H1 (cell line): ENCODE measurements at regions of chr6 and their contacts with region 1.

Region 1: DNA sequence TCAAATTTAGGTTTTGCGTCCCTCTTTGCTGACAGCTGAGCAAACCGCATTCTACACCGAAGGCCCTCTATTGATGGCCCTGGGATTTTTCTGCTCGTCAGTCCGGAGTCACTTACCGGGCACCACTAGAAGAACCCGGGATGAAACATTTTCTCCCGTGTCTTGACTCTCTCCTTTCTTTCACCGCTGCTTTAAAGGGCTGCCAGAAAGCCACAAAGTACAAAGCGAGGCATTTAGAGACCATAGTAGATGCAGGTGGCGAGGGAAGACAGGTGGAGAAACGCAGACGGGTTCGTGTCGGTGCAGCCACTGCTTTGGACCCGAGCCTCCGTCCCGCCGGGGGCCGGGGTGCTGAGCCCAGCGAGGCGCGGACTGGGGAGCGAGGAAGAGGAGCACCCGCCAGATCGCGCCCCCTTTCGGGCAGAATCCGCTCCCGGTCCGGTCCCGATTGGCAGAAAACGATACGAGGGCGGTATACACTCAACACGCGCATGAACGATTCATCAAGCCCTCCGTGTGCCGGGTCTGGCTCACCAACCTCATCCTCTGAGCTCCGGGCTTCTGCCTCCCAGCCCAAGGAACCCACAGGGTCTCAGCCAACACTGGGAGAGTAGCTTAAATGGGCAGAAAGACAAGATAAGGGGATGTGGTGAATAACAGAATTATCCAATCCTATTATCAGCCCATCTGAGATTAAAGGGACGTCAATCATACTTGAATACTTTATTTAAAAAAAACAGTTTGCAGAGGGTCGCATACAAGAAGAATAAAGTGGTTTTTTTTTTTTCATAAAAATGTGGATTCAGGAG is 84.9 kb downstream of the TRIM27 start:
- DNase-seq: peak; percentile 69 to 96
- H3K4me3 ChIP-seq: peak overlapping the region; percentile 80 to 96 (median 88)
- H3K27ac ChIP-seq: no peak overlapping the region
- H3K4me1 ChIP-seq: no peaks in the 10 kb centered on the region
- H3K27me3 ChIP-seq: no peaks in the 10 kb centered on the region; a peak in 1 of 7 replicates
- CTCF ChIP-seq: peak; percentile 61 to 89 (median 74)
- EP300 ChIP-seq: no peak
- POLR2A ChIP-seq: no peak
- RAD21 ChIP-seq: peak; percentile 38 to 47

Region 2: GRCh38 chr6:28824793-28825731 is 13.8 kb before region 1 on chr6:
- CTCF ChIA-PET with region 1: interaction called, 28 read pairs
- POLR2A ChIA-PET with region 1: interaction called, 9 read pairs
- DNase-seq: no peak
- H3K4me3 ChIP-seq: peak overlapping the region; percentile 51 to 62 (median 58); a peak in 7 of 8 replicates
- H3K27ac ChIP-seq: no peak overlapping the region
- H3K4me1 ChIP-seq: peaks cover 0 to 3% (median 0%) of the 10 kb centered on the region in 4 experiments; a peak in 4 of 7 replicates
- H3K27me3 ChIP-seq: peaks cover 29 to 64% (median 46%) of the 10 kb centered on the region in 4 experiments
- CTCF ChIP-seq: no peak
- EP300 ChIP-seq: no peak
- POLR2A ChIP-seq: no peak
- RAD21 ChIP-seq: no peak

Region 3: DNA sequence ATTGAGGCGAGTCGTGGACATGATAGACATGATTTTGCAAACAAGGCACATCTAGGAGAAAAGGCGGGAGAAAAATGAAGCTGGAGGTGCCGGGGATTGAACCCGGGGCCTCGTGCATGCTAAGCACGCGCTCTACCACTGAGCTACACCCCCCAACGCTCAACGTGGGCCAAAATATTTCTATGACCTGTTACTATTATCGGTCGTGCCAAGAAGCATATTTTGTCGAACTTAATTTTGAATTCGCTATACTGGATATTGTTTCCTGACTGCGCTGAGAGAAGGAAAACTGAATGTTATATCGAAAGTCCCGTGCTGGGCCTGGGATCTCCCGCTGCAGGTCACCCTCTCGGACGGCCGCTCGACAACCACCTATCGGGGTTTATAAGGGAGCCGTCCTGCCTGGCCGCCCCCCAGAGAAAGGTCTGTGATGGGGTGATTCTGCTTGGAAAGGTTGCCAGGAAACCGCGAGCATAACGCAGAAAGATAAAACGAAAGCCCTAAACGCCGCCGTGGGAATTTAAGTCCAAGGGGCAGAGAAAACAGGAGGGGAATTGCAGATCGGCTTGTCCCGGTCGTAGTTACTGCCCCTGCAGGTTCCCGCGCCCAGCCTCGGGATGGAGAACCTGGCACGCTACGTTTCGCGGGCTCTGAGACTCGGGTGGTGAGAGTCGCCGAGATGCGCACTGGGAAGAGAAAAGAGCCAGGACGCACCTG is 24.9 kb after region 1 on chr6:
- CTCF ChIA-PET with region 1: interaction called, 107 read pairs
- POLR2A ChIA-PET with region 1: interaction called, 55 read pairs
- DNase-seq: peak in 1 of 2 experiments; percentile 91
- H3K4me3 ChIP-seq: peak overlapping the region; percentile 89 to 97 (median 92)
- H3K27ac ChIP-seq: no peak overlapping the region
- H3K4me1 ChIP-seq: peaks cover 0 to 4% (median 1%) of the 10 kb centered on the region in 4 experiments; a peak in 3 of 7 replicates
- H3K27me3 ChIP-seq: 0 out of 7 replicates have a peak, but pooled peaks cover 0 to 4% (median 0%) of the 10 kb centered on the region in 4 experiments
- CTCF ChIP-seq: no peak
- EP300 ChIP-seq: no peak
- POLR2A ChIP-seq: 0 out of 3 replicates have a peak, but pooled peaks of 1 of the 2 experiments have one; percentile 25
- RAD21 ChIP-seq: peak in 1 of 2 experiments; percentile 10; a peak in 1 of 4 replicates

Region 4: GRCh38 chr6:28875191-28875747 is 36.4 kb after region 1 on chr6:
- CTCF ChIA-PET with region 1: interaction called, 10 read pairs
- POLR2A ChIA-PET with region 1: interaction called, 6 read pairs
- DNase-seq: no peak
- H3K4me3 ChIP-seq: peak overlapping the region in 1 of 4 experiments; percentile 15; a peak in 1 of 8 replicates
- H3K27ac ChIP-seq: no peak overlapping the region
- H3K4me1 ChIP-seq: peaks cover 1 to 5% (median 4%) of the 10 kb centered on the region in 4 experiments; a peak in 4 of 7 replicates
- H3K27me3 ChIP-seq: no peaks in the 10 kb centered on the region
- CTCF ChIP-seq: no peak
- EP300 ChIP-seq: no peak
- POLR2A ChIP-seq: no peak
- RAD21 ChIP-seq: no peak

Region 5: GRCh38 chr6:28895134-28895812 is 56.4 kb after region 1 on chr6:
- CTCF ChIA-PET with region 1: interaction called, 9 read pairs
- POLR2A ChIA-PET with region 1: interaction called, 15 read pairs
- DNase-seq: peak; percentile 87
- H3K4me3 ChIP-seq: peak overlapping the region; percentile 81 to 90 (median 84)
- H3K27ac ChIP-seq: peak overlapping the region; percentile 89
- H3K4me1 ChIP-seq: no peaks in the 10 kb centered on the region
- H3K27me3 ChIP-seq: no peaks in the 10 kb centered on the region
- CTCF ChIP-seq: no peak
- EP300 ChIP-seq: no peak
- POLR2A ChIP-seq: peak; percentile 80 to 96
- RAD21 ChIP-seq: no peak

Region 6: DNA sequence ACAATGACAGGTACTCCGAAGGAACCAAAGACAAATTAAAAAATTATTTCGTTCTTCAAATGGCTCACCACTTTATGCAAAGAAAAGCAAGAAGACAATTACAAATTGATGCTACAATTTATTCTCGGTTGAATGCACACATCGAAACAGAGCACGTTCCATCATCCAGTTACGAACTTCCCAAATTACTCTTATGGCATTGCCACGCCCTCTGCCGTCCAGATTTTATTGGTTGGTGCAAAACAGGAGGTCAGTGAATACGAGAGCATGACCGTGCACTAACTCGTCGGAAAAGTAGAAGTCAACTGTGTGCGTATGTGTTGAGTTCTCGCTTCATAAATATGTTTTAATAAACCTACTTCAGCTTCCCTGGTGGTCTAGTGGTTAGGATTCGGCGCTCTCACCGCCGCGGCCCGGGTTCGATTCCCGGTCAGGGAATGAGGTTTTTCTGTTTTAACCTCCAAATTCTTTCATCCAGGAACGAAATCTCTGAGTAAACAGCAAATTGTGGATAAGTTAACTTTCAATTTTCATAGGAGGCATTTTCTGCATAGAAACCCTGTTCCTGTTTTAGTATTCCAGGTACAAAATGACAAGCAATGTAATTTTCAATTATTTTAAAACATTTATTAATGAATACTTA is 143.1 kb after region 1 on chr6:
- CTCF ChIA-PET with region 1: interaction called, 10 read pairs
- POLR2A ChIA-PET with region 1: interaction called, 22 read pairs
- DNase-seq: peak in 1 of 2 experiments; percentile 89
- H3K4me3 ChIP-seq: peak overlapping the region; percentile 91 to 100 (median 96)
- H3K27ac ChIP-seq: no peak overlapping the region
- H3K4me1 ChIP-seq: peaks cover 0 to 12% (median 2%) of the 10 kb centered on the region in 4 experiments; a peak in 5 of 7 replicates
- H3K27me3 ChIP-seq: peaks cover 0 to 2% (median 0%) of the 10 kb centered on the region in 4 experiments; a peak in 2 of 7 replicates
- CTCF ChIP-seq: peak in 1 of 3 experiments; percentile 10; a peak in 1 of 4 replicates
- EP300 ChIP-seq: no peak
- POLR2A ChIP-seq: no peak
- RAD21 ChIP-seq: no peak; a peak in 1 of 4 replicates

Region 7: GRCh38 chr6:29016559-29017427 is 178.0 kb after region 1 on chr6:
- CTCF ChIA-PET with region 1: interaction called, 10 read pairs
- POLR2A ChIA-PET with region 1: interaction called, 4 read pairs
- DNase-seq: peak in 1 of 2 experiments; percentile 90
- H3K4me3 ChIP-seq: peak overlapping the region; percentile 69 to 95 (median 82)
- H3K27ac ChIP-seq: no peak overlapping the region
- H3K4me1 ChIP-seq: no peaks in the 10 kb centered on the region
- H3K27me3 ChIP-seq: peaks cover 0 to 8% (median 3%) of the 10 kb centered on the region in 4 experiments; a peak in 5 of 7 replicates
- CTCF ChIP-seq: peak; percentile 61 to 77 (median 74)
- EP300 ChIP-seq: no peak
- POLR2A ChIP-seq: 0 out of 3 replicates have a peak, but pooled peaks of 1 of the 2 experiments have one; percentile 22
- RAD21 ChIP-seq: peak; percentile 68 to 80